T-cell (primary cell): ENCODE measurements at regions of chr2 and their contacts with region 1.

Region 1: DNA sequence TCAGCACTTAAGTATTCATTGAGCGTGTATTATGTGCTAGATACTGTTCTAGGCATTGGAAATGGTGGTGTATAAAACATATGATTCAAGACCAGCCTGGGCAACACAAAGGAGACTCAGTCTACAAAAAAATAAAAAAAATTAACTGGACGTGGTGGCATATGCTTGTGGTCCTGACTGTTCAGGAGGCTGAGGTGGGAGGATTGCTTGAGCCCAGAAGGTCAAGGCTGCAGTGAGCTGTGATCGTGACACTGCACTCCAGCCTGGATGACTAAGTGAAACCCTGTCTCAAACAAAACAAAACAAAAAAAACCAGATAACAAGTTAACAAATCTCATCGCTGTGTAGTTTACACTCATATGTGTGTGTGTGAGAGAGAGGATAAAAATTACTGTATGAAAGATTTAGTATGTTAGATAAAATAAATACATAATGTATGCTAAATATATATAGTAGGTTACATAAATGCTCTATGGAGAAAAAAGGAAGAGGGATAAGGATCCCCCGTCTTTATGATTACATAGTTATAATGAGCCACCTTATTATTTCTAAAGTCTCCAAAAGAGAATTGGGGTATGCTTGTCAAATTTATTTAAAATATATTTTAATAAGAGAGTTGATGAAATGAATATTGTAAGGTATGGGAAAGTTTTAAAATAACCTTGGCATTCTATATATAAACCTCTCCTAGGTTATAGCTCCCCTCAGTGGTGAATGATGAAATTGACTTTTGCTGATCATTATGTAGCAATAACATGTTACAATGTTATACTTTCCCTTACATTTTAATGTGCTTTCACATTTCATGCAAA is 69.2 kb downstream of the EHBP1 start:
- DNase-seq: peak in 2 of 35 experiments; percentile 8 to 61
- ATAC-seq: no peak
- H3K4me3 ChIP-seq: no peak overlapping the region
- H3K4me3 Mint-ChIP-seq: no peak overlapping the region
- H3K27ac ChIP-seq: no peak overlapping the region
- H3K27ac Mint-ChIP-seq: no peak overlapping the region
- H3K4me1 ChIP-seq: no peaks in the 10 kb centered on the region
- H3K4me1 Mint-ChIP-seq: peaks cover 4 to 8% (median 6%) of the 10 kb centered on the region in 3 donors
- H3K27me3 ChIP-seq: no peaks in the 10 kb centered on the region
- H3K27me3 Mint-ChIP-seq: no peaks in the 10 kb centered on the region

Region 2: DNA sequence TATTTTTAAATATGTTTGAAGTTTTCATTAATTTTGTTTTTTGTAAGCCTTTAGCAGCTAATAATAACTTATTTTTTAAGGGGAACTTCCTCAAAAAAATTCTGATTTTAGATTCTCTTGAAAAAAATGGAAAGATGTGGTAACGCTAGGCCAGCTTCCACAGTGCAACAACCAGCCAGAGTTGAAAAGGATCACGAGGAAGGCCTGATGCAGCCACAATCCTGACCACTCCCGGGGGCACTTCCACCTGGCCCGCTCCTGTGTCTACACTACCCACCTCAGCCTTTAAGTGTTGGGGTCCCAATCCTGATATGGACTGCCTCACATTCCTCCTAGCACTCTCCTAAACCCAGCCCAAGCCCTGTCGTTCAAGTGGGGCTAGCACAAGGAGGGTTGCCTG is 369.8 kb before region 1 on chr2:
- CTCF ChIA-PET with region 1: interaction called in 1 of 2 experiments, 10 read pairs
- POLR2A ChIA-PET with region 1: no interaction called
- DNase-seq: no peak
- ATAC-seq: no peak
- H3K4me3 ChIP-seq: no peak overlapping the region
- H3K4me3 Mint-ChIP-seq: no peak overlapping the region
- H3K27ac ChIP-seq: no peak overlapping the region
- H3K27ac Mint-ChIP-seq: no peak overlapping the region
- H3K4me1 ChIP-seq: peaks cover 0 to 3% of the 10 kb centered on the region in 2 experiments
- H3K4me1 Mint-ChIP-seq: no peaks in the 10 kb centered on the region
- H3K27me3 ChIP-seq: no peaks in the 10 kb centered on the region
- H3K27me3 Mint-ChIP-seq: no peaks in the 10 kb centered on the region

Region 3: DNA sequence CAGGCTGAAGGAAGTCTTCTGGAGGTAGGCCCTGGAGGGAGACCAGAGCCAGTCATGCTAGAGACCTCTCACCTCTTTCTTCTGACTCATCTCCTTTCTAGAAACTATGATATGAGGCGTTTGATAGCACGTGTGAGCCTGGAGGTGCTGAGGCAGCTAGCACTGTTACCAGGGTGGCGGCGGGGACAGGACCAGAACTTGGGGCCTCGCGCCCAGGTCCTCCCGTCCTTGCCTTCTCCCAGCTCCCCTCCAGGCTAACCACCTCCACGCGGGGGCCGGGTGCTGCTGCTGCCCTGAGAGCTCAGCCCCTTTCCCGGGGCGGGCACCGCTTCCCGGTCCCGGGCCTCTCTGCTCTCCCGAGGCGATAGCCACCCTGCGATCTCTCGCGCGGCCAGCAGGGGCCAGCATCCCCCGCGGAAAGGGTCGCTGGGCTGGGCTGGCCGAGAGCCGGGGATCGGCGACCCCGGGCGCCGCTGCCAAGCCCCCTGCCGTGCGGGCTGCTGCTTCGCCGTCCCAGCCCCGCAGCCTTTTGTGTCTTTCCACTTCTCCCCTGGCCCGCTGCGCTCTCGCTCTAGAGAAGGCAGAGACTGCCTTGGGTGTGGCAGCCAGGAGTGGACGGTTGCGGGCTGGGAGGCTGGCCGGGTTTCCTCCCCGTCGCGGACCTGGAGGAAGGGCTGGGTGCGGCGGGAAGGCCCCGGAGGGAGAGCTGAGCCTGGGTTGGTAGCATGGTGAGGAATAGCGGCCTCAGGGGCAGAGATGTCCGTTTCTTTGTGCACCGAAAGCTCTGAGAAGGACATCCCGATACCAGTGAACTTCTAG is 317.8 kb before region 1 on chr2:
- CTCF ChIA-PET with region 1: interaction called, 36 to 48 read pairs
- POLR2A ChIA-PET with region 1: no interaction called
- DNase-seq: peak; percentile 15 to 69 (median 50)
- ATAC-seq: peak; percentile 76 to 88 (median 80)
- H3K4me3 ChIP-seq: peak overlapping the region; percentile 30 to 60
- H3K4me3 Mint-ChIP-seq: peak overlapping the region; percentile 47 to 50 (median 49)
- H3K27ac ChIP-seq: no peak overlapping the region
- H3K27ac Mint-ChIP-seq: no peak overlapping the region
- H3K4me1 ChIP-seq: peaks cover 0 to 12% of the 10 kb centered on the region in 2 experiments
- H3K4me1 Mint-ChIP-seq: peaks cover 0 to 4% (median 3%) of the 10 kb centered on the region in 3 donors
- H3K27me3 ChIP-seq: peaks cover 0 to 22% of the 10 kb centered on the region in 2 experiments
- H3K27me3 Mint-ChIP-seq: peaks cover 2 to 4% of the 10 kb centered on the region in 2 donors